ENCODE measurements at regions of chr2 and their contacts with region 1.

Region 1: DNA sequence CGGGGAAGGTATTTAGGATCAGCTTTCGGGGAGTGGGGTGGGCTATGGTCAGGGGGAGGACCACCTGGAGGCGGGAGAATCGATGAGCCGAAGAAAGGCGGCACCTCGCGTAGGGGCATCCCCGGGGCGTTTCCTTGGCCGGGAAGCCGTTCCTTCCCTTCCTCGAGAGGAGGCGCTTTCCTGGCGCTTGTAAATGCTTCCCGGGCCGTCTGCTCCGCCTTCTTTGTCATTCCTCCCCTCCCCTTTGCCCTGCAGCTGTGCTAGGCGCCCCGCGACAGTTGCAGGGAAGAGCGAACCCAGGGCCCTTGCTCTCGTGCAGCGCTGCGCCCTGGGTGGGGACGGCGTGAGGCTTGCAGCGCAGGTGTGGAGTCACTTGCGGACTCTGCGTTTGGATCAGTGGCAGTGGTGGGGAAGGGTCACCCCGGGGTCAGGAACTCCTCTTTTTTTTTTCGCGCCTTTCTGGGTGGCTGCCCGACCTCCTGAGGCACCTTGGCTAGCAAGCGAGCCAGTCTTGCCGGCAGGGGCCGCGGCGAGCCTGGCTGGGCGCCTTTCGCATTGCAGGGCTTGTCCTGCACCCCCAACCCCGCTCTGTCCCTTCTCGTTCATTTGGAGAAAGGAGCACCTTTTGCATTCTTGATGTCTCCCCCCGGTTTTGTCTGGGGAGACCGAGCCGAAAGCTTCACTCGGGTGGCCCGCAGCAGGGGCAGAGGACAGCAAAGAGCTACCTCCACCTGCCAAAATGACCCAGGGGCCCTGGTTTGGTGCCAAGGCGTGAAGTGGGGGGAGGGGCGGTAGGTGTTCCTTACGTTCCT is 840 bp downstream of the KCNS3 start:
- DNase-seq: peak; percentile 69 to 87 (median 86)
- ATAC-seq: peak; percentile 84 to 86
- H3K4me3 ChIP-seq: peak overlapping the region; percentile 57
- H3K27ac ChIP-seq: no peak overlapping the region
- H3K4me1 ChIP-seq: no peaks in the 10 kb centered on the region
- H3K27me3 ChIP-seq: no peaks in the 10 kb centered on the region

Region 2: DNA sequence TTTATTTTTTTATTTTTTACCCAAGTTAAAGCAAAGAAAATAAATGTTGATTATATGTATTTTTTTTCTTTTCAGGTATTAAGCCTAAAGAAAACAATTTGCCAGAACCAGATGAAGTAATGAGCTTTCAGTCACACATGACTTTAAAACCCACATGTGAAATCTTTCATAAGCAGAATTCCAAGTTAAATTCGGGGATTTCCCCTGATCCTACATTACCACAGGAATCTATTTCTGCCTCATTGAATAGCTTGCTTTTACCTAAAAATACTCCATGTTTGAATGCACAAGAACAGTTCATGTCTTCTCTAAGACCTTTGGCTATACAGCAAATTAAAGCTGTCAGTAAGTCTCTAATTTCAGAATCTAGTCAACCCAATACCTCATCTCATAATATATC is 98.8 kb before region 1 on chr2:
- intact Hi-C with region 1: no loop called
- DNase-seq: no peak
- ATAC-seq: no peak
- H3K4me3 ChIP-seq: no peak overlapping the region
- H3K27ac ChIP-seq: no peak overlapping the region
- H3K4me1 ChIP-seq: no peaks in the 10 kb centered on the region
- H3K27me3 ChIP-seq: no peaks in the 10 kb centered on the region

Region 3: DNA sequence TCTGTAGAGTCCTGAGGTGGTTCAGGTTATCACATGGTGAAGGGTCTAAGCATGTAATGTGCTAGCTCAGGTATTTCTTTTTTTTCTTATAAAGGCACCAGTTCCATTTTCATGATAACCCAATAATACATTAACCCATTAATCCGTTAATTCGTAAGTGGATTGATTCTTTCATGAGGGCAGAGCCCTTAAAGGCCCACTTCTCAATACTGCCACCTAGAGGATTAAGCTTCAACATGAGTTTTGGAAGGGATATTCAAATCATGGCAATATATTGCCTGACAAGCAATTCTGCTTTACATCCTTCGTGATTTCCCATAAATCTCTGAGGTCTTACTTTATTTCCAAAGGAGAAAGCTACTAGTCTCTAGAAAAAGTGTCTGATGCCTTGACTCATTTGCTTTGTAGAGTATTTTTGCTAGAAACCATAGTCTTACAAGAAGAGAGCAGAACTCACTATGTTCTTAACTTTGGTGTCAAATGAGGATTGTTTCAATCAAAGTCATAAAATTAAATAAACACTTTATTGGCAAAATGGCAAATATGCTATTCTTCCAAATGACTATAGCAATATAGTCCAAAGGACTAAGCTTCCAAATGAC is 270.4 kb after region 1 on chr2:
- intact Hi-C with region 1: loop called in 1 of 4 experiments (anchors 10 kb)
- DNase-seq: no peak
- ATAC-seq: no peak
- H3K4me3 ChIP-seq: no peak overlapping the region
- H3K27ac ChIP-seq: no peak overlapping the region
- H3K4me1 ChIP-seq: no peaks in the 10 kb centered on the region
- H3K27me3 ChIP-seq: no peaks in the 10 kb centered on the region